Gastrocnemius medialis (tissue), 4 donors: ENCODE measurements at regions of chr17 and their contacts with region 1.

Region 1: GRCh38 chr17:17783116-17783824 is 53.5 kb downstream of the SREBF1 start:
- DNase-seq: peak; percentile 74 to 90
- ATAC-seq: peak; percentile 61 to 67
- H3K4me3 ChIP-seq: peak overlapping the region; percentile 56 to 94 (median 62)
- H3K27ac ChIP-seq: peak overlapping the region; percentile 88 to 98 (median 93)
- H3K4me1 ChIP-seq: peaks cover 45 to 53% of the 10 kb centered on the region in 2 donors
- H3K27me3 ChIP-seq: no peaks in the 10 kb centered on the region
- CTCF ChIP-seq: peak in 2 of 5 experiments; percentile 11 to 20
- POLR2A ChIP-seq: peak; percentile 65 to 78

Region 2: DNA sequence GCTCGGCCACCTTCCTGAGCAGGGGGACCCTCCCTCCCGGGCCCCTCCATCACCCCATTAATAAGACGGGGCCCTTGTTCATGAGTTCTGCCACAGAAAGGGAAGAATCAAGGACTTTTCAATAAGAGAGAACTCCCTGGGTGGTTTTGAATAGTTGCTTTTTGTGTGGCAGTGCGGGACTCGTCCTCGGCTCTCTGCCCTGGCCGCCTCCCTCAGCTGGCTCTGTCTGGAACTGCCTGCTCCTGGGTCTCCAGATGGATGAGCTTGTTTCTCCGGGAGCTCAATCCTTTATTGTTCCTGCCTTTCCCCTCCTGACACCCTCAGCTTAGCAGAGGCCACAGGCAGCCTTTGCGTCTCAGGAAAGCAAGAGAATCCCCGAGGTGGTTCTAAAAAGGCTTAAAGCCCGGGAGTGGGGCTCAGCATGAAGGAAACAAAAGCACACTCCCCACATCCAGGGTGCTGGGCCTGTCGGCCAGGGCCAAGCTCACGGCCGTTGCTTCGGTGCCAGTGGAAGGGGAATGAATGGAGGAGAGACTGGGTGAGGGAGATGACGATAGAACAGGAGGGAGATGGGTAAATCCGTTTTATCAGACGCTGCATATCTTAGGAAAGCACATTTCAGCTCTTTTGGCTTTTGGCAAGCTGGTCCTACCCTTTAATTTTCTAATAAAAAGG is 41.8 kb before region 1 on chr17:
- in situ Hi-C with region 1: no loop called
- intact Hi-C with region 1: no loop called
- DNase-seq: no peak
- ATAC-seq: no peak
- H3K4me3 ChIP-seq: no peak overlapping the region
- H3K27ac ChIP-seq: no peak overlapping the region
- H3K4me1 ChIP-seq: peaks cover 25 to 36% of the 10 kb centered on the region in 2 donors
- H3K27me3 ChIP-seq: no peaks in the 10 kb centered on the region
- CTCF ChIP-seq: no peak
- POLR2A ChIP-seq: no peak

Region 3: GRCh38 chr17:17752089-17752820 is 31.0 kb before region 1 on chr17:
- in situ Hi-C with region 1: no loop called
- intact Hi-C with region 1: loop called (anchors 2 kb)
- DNase-seq: peak; percentile 92 to 95
- ATAC-seq: peak; percentile 84 to 87
- H3K4me3 ChIP-seq: peak overlapping the region; percentile 49 to 72 (median 66)
- H3K27ac ChIP-seq: peak overlapping the region; percentile 77 to 91 (median 88)
- H3K4me1 ChIP-seq: peaks cover 16 to 24% of the 10 kb centered on the region in 2 donors
- H3K27me3 ChIP-seq: no peaks in the 10 kb centered on the region
- CTCF ChIP-seq: peak in 1 of 5 experiments; percentile 32
- POLR2A ChIP-seq: peak; percentile 67 to 75

Region 4: DNA sequence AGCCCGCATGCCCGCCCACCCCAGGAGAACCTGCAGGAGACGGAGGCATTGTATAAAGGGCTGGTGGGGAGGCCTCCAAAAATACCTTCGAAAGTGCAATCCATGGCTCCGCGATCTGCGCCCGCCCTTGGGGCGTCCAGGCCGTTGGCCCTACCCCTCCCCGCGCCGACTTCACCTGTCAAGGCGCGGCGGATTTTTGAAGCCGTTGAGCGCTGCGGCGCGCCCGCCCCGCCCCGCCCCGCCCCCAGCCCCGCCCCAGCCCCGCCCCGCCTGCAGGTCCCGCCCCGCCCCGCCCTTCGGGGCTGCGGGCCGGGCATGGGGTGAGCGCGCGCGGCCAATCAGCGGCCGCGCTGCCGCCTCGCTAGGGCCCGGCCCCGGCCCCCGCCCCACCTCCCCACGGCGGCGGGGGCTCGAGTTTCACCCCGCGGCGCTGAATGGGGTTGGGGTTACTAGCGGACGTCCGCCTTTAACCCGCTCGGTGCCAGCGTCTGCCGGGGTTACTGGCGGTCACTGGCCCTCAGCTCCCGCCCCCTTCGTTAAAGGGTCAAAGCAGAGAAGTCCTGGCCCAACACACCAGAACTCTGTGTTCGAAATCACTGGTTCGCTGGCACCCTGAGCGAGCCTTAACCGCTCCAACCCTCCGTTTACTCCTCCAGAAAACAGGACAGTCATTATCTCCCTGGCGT is 40.3 kb after region 1 on chr17:
- in situ Hi-C with region 1: no loop called
- intact Hi-C with region 1: loop called (anchors 2 kb)
- DNase-seq: peak; percentile 79 to 93
- ATAC-seq: peak; percentile 68 to 73
- H3K4me3 ChIP-seq: peak overlapping the region; percentile 57 to 83 (median 64)
- H3K27ac ChIP-seq: peak overlapping the region; percentile 93 to 97 (median 96)
- H3K4me1 ChIP-seq: peaks cover 74 to 86% of the 10 kb centered on the region in 2 donors
- H3K27me3 ChIP-seq: no peaks in the 10 kb centered on the region
- CTCF ChIP-seq: no peak
- POLR2A ChIP-seq: peak; percentile 60 to 91

Region 5: GRCh38 chr17:17836250-17836817 is 53.1 kb after region 1 on chr17:
- in situ Hi-C with region 1: no loop called
- intact Hi-C with region 1: loop called (anchors 2 kb)
- DNase-seq: peak; percentile 97 to 98
- ATAC-seq: peak; percentile 74 to 81
- H3K4me3 ChIP-seq: peak overlapping the region; percentile 79 to 89 (median 80)
- H3K27ac ChIP-seq: peak overlapping the region; percentile 97 to 100 (median 99)
- H3K4me1 ChIP-seq: peaks cover 67 to 71% of the 10 kb centered on the region in 2 donors
- H3K27me3 ChIP-seq: no peaks in the 10 kb centered on the region
- CTCF ChIP-seq: no peak
- POLR2A ChIP-seq: peak; percentile 99 to 100